PC-3 (cell line): ENCODE measurements at regions of chr14 and their contacts with region 1.

Region 1: GRCh38 chr14:89027097-89027740 is 202.8 kb downstream of the TTC8 start:
- DNase-seq: peak; percentile 67
- ATAC-seq: peak; percentile 92
- H3K4me3 ChIP-seq: peak overlapping the region; percentile 79
- H3K27ac ChIP-seq: no peak overlapping the region
- H3K4me1 ChIP-seq: peaks cover 3% of the 10 kb centered on the region; the same call in 1 of the 2 replicates
- H3K27me3 ChIP-seq: 0 out of 2 replicates have a peak, but pooled peaks cover 3% of the 10 kb centered on the region
- CTCF ChIP-seq: peak; percentile 86

Region 2: DNA sequence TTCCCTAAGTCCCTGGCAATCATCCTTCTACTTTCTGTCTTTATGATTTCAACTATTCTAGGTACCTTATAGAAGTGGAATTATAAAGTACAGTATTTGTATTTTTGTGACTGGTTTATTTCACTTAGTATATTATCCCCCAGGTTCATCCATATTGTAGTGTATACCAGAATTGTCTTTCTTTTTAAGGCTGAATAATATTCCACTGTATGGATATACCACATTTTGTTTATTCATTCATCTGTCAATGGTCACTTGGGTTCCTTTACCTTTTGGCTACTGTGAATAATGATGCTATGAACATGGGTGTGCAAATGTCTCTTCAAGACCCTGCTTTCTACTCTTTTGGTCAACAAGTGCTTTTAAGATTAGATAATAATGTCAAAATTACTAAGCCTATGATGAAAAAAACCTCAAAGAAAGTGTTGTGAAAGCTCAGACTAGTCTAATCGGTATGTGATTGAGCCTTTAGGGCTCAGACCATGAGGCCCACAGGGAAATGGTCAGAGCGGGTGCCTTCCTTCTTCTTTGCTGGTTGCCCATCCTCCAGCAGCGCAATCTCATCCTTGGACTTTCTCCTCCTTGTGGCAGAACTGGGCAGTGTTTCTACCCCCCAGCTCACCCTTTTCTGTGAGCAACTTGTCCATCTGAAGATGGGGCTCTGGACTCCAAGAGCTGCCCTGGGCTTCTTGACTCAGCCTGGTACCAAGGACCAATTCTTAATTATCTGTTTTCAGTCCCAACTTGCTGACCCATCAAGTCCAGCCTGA is 97.4 kb before region 1 on chr14:
- CTCF ChIA-PET with region 1: no interaction called
- POLR2A ChIA-PET with region 1: no interaction called
- intact Hi-C with region 1: no loop called
- DNase-seq: peak; percentile 25
- ATAC-seq: no peak
- H3K4me3 ChIP-seq: no peak overlapping the region
- H3K27ac ChIP-seq: no peak overlapping the region
- H3K4me1 ChIP-seq: no peaks in the 10 kb centered on the region
- H3K27me3 ChIP-seq: no peaks in the 10 kb centered on the region
- CTCF ChIP-seq: peak; percentile 40; the same call in 1 of the 2 replicates

Region 3: DNA sequence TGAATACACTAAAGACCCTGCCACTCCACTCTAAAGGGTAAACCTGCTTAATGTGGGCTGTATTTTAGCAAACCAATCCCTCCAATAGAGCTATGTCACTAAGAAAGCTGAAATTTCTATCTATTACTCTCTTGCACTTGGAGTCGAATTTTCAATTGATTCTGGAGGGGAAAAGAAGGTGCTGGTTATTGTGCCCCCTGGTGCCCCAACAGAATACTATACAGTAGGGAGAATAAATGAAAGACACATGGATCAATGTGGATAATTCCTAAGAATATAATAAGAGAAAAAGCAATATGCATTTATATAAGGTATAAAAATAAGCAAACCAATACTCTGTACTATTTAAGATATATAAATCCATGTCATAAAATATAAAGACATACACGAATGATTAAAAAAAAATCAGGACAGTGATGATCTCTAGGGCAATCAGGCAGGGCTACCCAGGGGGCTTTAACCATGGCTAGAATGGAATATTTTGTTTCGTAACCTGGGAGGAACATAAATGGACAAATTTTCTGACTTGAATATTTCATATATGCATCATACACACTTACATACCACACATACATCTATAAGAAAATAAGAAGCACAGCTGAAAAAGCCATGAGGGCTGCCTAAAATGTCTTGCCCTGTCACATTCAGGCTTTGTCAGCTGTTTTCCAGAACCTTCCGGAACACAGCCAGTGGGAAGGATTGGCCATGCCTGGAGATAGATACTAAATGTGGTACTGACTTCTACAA is 872.9 kb after region 1 on chr14:
- CTCF ChIA-PET with region 1: no interaction called
- POLR2A ChIA-PET with region 1: no interaction called
- intact Hi-C with region 1: loop called (anchors 5 kb)
- DNase-seq: peak; percentile 29
- ATAC-seq: peak; percentile 55
- H3K4me3 ChIP-seq: no peak overlapping the region
- H3K27ac ChIP-seq: no peak overlapping the region
- H3K4me1 ChIP-seq: no peaks in the 10 kb centered on the region
- H3K27me3 ChIP-seq: no peaks in the 10 kb centered on the region
- CTCF ChIP-seq: peak; percentile 73

Region 4: GRCh38 chr14:89936658-89937185 is 909.5 kb after region 1 on chr14:
- CTCF ChIA-PET with region 1: no interaction called
- POLR2A ChIA-PET with region 1: no interaction called
- intact Hi-C with region 1: loop called (anchors 5 kb)
- DNase-seq: peak; percentile 26
- ATAC-seq: peak; percentile 64
- H3K4me3 ChIP-seq: no peak overlapping the region
- H3K27ac ChIP-seq: no peak overlapping the region
- H3K4me1 ChIP-seq: no peaks in the 10 kb centered on the region
- H3K27me3 ChIP-seq: no peaks in the 10 kb centered on the region
- CTCF ChIP-seq: peak; percentile 46